ENCODE measurements at regions of chr1 and their contacts with region 1.

Region 1: GRCh38 chr1:165949335-165950130 is 122.1 kb downstream of the UCK2 start:
- DNase-seq: no peak
- H3K4me3 ChIP-seq: no peak overlapping the region
- H3K27ac ChIP-seq: no peak overlapping the region
- H3K4me1 ChIP-seq: no peaks in the 10 kb centered on the region
- H3K27me3 ChIP-seq: no peaks in the 10 kb centered on the region
- CTCF ChIP-seq: no peak
- POLR2A ChIP-seq: no peak

Region 2: GRCh38 chr1:165936542-165936941 is 13.0 kb before region 1 on chr1:
- intact Hi-C with region 1: loop called (anchors 1 kb)
- DNase-seq: no peak
- H3K4me3 ChIP-seq: no peak overlapping the region
- H3K27ac ChIP-seq: no peak overlapping the region
- H3K4me1 ChIP-seq: no peaks in the 10 kb centered on the region
- H3K27me3 ChIP-seq: no peaks in the 10 kb centered on the region
- CTCF ChIP-seq: no peak
- POLR2A ChIP-seq: no peak

Measured in breast epithelium (tissue), 4 donors.